Dendritic cell treated with granulocyte-macrophage colony-stimulating factor and Interleukin-4, amounts not matched to agents 40 ng/mL and 50 ng/mL, for 4 days (primary cell): ENCODE measurements at regions of chr3 and their contacts with region 1.

Region 1: GRCh38 chr3:12484198-12484974 is at the start of gene TSEN2:
- H3K4me3 Mint-ChIP-seq: peak within 1 kb of the TSS; percentile 98
- H3K27ac Mint-ChIP-seq: peak within 1 kb of the TSS; percentile 91
- H3K4me1 Mint-ChIP-seq: peaks cover 66% of the 10 kb centered on the region
- H3K27me3 Mint-ChIP-seq: no peaks in the 10 kb centered on the region

Region 2: GRCh38 chr3:12135029-12135657 is 349.2 kb before region 1 on chr3:
- intact Hi-C with region 1: loop called (anchors 1 kb)
- H3K4me3 Mint-ChIP-seq: no peak overlapping the region
- H3K27ac Mint-ChIP-seq: no peak overlapping the region
- H3K4me1 Mint-ChIP-seq: peaks cover 12% of the 10 kb centered on the region
- H3K27me3 Mint-ChIP-seq: peaks cover 21% of the 10 kb centered on the region

Region 3: GRCh38 chr3:12175844-12176453 is 308.4 kb before region 1 on chr3:
- intact Hi-C with region 1: loop called (anchors 5 kb)
- H3K4me3 Mint-ChIP-seq: no peak overlapping the region
- H3K27ac Mint-ChIP-seq: peak overlapping the region; percentile 3
- H3K4me1 Mint-ChIP-seq: peaks cover 67% of the 10 kb centered on the region
- H3K27me3 Mint-ChIP-seq: no peaks in the 10 kb centered on the region

Region 4: DNA sequence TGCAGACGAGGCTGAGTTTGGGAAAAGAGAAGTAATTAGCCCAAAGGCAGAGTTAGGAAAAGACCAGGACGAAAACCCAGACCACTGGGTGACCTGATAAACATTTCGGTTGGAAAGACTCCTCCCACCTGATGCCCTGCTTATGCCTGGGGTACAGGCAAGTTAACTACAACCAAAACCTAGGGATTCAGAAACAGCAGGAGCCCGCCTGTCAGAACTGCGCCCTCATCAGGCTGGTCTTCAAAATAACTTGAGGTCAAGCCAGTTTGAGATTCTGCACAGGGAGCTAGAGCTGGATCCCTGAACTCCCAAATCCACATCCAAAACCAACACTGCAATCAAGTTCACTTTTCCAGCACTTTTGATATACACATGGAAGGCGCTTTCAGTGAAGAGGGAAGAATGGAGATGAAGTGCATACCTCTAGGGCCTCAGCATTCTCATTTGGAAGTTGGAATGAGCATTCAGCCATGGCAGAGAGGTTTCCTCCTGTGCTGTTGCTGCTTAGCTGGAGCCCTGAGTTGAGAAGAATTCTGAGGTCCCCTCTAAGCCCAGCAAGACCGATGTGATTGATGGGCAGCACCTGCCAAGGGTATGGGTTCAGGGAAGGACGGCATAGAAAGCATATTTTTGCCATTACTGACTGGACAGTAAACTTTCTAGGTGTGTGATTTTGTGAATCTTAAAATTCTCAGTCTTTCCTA is 11.5 kb after region 1 on chr3:
- intact Hi-C with region 1: no loop called
- H3K4me3 Mint-ChIP-seq: no peak overlapping the region
- H3K27ac Mint-ChIP-seq: no peak overlapping the region
- H3K4me1 Mint-ChIP-seq: no peaks in the 10 kb centered on the region
- H3K27me3 Mint-ChIP-seq: no peaks in the 10 kb centered on the region